CD14-positive monocyte (primary cell): ENCODE measurements at regions of chrX and their contacts with region 1.

Region 1: GRCh38 chrX:1453951-1454785 is 1.5 kb upstream of the ASMTL start:
- DNase-seq: peak; percentile 76 to 84 (median 78)
- H3K4me3 ChIP-seq: peak overlapping the region; percentile 45 to 81 (median 76)
- H3K4me3 Mint-ChIP-seq: peak overlapping the region; percentile 51 to 57
- H3K27ac ChIP-seq: peak overlapping the region; percentile 69 to 95
- H3K27ac Mint-ChIP-seq: peak overlapping the region in 5 of 7 donors; percentile 57 to 81 (median 65)
- H3K4me1 ChIP-seq: peaks cover 13 to 16% of the 10 kb centered on the region in 2 donors
- H3K4me1 Mint-ChIP-seq: peaks cover 3% of the 10 kb centered on the region
- H3K27me3 ChIP-seq: no peaks in the 10 kb centered on the region
- H3K27me3 Mint-ChIP-seq: peaks cover 3 to 9% (median 3%) of the 10 kb centered on the region in 3 donors
- CTCF ChIP-seq: peak; percentile 99

Region 2: GRCh38 chrX:1246816-1247215 is 207.4 kb before region 1 on chrX:
- intact Hi-C with region 1: loop called in 1 of 2 experiments (anchors 2 kb)
- DNase-seq: peak; percentile 80 to 82 (median 82)
- H3K4me3 ChIP-seq: no peak overlapping the region
- H3K4me3 Mint-ChIP-seq: no peak overlapping the region
- H3K27ac ChIP-seq: no peak overlapping the region
- H3K27ac Mint-ChIP-seq: peak overlapping the region in 6 of 7 donors; percentile 26 to 82 (median 72)
- H3K4me1 ChIP-seq: peaks cover 42 to 43% of the 10 kb centered on the region in 2 donors
- H3K4me1 Mint-ChIP-seq: peaks cover 46% of the 10 kb centered on the region
- H3K27me3 ChIP-seq: peaks cover 0 to 3% of the 10 kb centered on the region in 2 donors
- H3K27me3 Mint-ChIP-seq: peaks cover 2 to 22% (median 17%) of the 10 kb centered on the region in 3 donors
- CTCF ChIP-seq: peak; percentile 83

Region 3: DNA sequence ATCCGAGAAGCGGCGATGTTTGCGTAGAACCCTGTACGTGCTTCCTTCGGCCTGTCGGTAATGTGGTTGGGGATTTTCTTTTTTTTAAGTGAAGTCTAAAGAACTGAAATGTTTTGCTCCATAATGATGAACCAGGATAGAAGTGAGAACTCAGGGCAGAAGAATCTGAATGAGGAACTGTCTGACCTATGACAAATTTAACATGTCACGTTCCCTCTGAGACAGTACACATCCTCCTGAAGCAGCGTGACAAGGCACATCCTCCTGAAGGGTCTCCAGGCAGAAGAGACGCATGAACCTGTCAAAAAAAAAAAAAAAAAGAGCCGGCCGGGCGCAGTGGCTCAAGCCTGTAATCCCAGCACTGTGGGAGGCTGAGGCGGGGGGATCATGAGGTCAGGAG is 179.4 kb before region 1 on chrX:
- intact Hi-C with region 1: no loop called
- DNase-seq: peak; percentile 84 to 94 (median 93)
- H3K4me3 ChIP-seq: peak overlapping the region in 1 of 3 experiments; percentile 64
- H3K4me3 Mint-ChIP-seq: peak overlapping the region; percentile 51 to 73
- H3K27ac ChIP-seq: peak overlapping the region; percentile 78
- H3K27ac Mint-ChIP-seq: peak overlapping the region; percentile 92 to 98 (median 97)
- H3K4me1 ChIP-seq: peaks cover 69 to 73% of the 10 kb centered on the region in 2 donors
- H3K4me1 Mint-ChIP-seq: peaks cover 56% of the 10 kb centered on the region
- H3K27me3 ChIP-seq: no peaks in the 10 kb centered on the region
- H3K27me3 Mint-ChIP-seq: no peaks in the 10 kb centered on the region
- CTCF ChIP-seq: no peak

Region 4: DNA sequence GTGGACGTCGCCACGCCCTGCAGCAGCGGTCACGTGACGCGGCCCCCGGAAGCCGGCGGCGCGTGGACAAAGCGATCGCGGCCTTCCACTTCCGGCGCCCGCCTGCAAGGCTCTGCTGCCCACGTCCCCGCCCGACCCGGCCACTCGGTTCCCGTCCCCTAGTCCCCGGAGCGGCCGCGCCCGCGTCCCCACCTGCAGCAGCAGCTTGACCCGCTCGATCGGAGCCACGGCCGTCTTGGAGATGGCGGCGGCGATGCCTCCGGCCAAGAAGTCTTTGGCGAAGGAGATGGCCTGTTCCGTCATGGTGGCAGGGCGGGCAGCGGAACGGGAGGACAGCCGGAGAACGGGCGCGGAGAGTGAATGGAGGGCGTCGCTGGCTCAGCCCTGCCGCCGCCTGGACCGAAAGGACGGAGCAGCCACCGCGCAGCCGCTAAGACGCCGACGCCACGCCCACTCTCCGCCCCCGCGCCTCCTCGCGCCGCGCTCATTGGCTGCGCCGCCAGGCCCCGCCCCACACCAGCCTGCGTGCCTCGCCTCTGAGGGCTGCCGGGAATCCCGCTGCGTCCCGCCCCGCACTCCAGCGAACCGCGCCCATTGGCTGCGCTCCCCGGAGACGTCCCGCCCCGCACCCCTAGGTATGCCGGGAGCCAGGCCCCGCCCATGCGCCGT is 62.3 kb before region 1 on chrX and contains the start of gene SLC25A6:
- intact Hi-C with region 1: loop called (anchors 2 to 5 kb)
- DNase-seq: peak; percentile 97 to 98 (median 98)
- H3K4me3 ChIP-seq: peak within 1 kb of the TSS; percentile 76 to 98 (median 93)
- H3K4me3 Mint-ChIP-seq: peak within 1 kb of the TSS; percentile 89 to 90
- H3K27ac ChIP-seq: peak within 1 kb of the TSS; percentile 95
- H3K27ac Mint-ChIP-seq: peak within 1 kb of the TSS; percentile 93 to 97 (median 96)
- H3K4me1 ChIP-seq: peaks cover 17 to 34% of the 10 kb centered on the region in 2 donors
- H3K4me1 Mint-ChIP-seq: peaks cover 22% of the 10 kb centered on the region
- H3K27me3 ChIP-seq: no peaks in the 10 kb centered on the region
- H3K27me3 Mint-ChIP-seq: peaks cover 0 to 2% (median 0%) of the 10 kb centered on the region in 3 donors
- CTCF ChIP-seq: peak; percentile 30
- polyA plus RNA-seq, gene SLC25A6: 442 to 769 (median 449) TPM

Region 5: GRCh38 chrX:1537035-1537715 is 83.0 kb after region 1 on chrX and contains the start of gene P2RY8:
- intact Hi-C with region 1: loop called in 1 of 2 experiments (anchors 5 kb)
- DNase-seq: peak; percentile 89 to 94 (median 90)
- H3K4me3 ChIP-seq: peak within 1 kb of the TSS; percentile 62 to 99 (median 95)
- H3K4me3 Mint-ChIP-seq: peak within 1 kb of the TSS; percentile 95 to 96
- H3K27ac ChIP-seq: peak within 1 kb of the TSS; percentile 91 to 97
- H3K27ac Mint-ChIP-seq: peak within 1 kb of the TSS; percentile 94 to 100 (median 99)
- H3K4me1 ChIP-seq: peaks cover 18 to 29% of the 10 kb centered on the region in 2 donors
- H3K4me1 Mint-ChIP-seq: peaks cover 17% of the 10 kb centered on the region
- H3K27me3 ChIP-seq: no peaks in the 10 kb centered on the region
- H3K27me3 Mint-ChIP-seq: peaks cover 0 to 2% (median 0%) of the 10 kb centered on the region in 3 donors
- CTCF ChIP-seq: no peak
- polyA plus RNA-seq, gene P2RY8: 18.9 to 40.0 (median 33.3) TPM

Region 6: GRCh38 chrX:1591102-1591900 is 137.1 kb after region 1 on chrX and contains the start of gene AKAP17A:
- intact Hi-C with region 1: loop called in 1 of 2 experiments (anchors 2 kb)
- DNase-seq: peak; percentile 88 to 94 (median 93)
- H3K4me3 ChIP-seq: peak within 1 kb of the TSS; percentile 71 to 97 (median 94)
- H3K4me3 Mint-ChIP-seq: peak within 1 kb of the TSS; percentile 95 to 97
- H3K27ac ChIP-seq: peak within 1 kb of the TSS; percentile 72 to 89
- H3K27ac Mint-ChIP-seq: peak within 1 kb of the TSS; percentile 92 to 98 (median 94)
- H3K4me1 ChIP-seq: peaks cover 21 to 27% of the 10 kb centered on the region in 2 donors
- H3K4me1 Mint-ChIP-seq: peaks cover 23% of the 10 kb centered on the region
- H3K27me3 ChIP-seq: no peaks in the 10 kb centered on the region
- H3K27me3 Mint-ChIP-seq: no peaks in the 10 kb centered on the region
- CTCF ChIP-seq: no peak
- polyA plus RNA-seq, gene AKAP17A: 8.9 to 118 (median 13.6) TPM

Region 7: DNA sequence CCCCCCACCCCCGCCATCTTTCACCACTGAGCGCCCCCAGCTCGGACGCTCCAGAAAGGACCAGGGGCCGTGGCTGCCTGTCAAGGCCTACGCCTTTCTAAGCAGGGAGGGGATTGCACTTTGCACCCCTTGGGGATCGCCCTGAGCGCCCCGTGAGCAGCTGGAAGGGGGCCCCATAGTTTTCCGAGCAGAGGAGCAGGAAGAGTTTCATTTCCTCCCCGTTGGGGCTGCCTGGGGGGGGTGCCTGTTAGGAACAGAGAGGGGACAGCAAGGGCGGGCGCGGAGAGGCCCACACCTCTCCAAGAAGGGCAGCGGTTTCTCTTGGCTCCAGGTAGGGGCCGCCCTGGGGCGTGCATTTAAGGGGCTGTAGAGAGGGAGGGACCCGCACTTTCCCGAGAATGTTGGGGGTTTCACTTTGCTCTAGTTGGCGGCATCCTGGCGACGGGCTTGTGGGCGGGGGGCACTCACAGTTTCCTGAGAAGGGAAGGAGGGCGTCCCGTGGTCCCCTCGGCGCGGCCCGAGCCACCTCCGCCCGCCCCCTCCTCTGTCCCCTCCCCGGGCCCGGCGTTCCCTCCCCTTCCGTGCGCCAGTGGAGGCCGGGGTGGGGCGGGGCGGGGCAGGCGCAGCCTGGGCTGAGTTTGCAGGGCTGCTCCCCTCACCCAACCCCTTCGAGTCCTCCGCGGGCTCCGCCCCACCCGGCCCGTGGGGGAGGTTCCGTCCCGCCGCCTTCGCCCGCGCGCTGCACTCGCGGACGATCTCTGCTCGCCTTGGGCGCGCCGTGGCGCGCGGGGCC is 1154.7 kb after region 1 on chrX:
- intact Hi-C with region 1: loop called in 1 of 2 experiments (anchors 10 kb)
- DNase-seq: peak; percentile 75 to 83 (median 75)
- H3K4me3 ChIP-seq: peak overlapping the region; percentile 88 to 90 (median 89)
- H3K4me3 Mint-ChIP-seq: peak overlapping the region; percentile 96
- H3K27ac ChIP-seq: peak overlapping the region; percentile 84 to 93
- H3K27ac Mint-ChIP-seq: peak overlapping the region; percentile 87 to 96 (median 93)
- H3K4me1 ChIP-seq: peaks cover 28 to 33% of the 10 kb centered on the region in 2 donors
- H3K4me1 Mint-ChIP-seq: peaks cover 52% of the 10 kb centered on the region
- H3K27me3 ChIP-seq: no peaks in the 10 kb centered on the region
- H3K27me3 Mint-ChIP-seq: peaks cover 0 to 3% (median 0%) of the 10 kb centered on the region in 3 donors
- CTCF ChIP-seq: no peak